Sigmoid colon (tissue), 7 donors: ENCODE measurements at regions of chr7 and their contacts with region 1.

Region 1: DNA sequence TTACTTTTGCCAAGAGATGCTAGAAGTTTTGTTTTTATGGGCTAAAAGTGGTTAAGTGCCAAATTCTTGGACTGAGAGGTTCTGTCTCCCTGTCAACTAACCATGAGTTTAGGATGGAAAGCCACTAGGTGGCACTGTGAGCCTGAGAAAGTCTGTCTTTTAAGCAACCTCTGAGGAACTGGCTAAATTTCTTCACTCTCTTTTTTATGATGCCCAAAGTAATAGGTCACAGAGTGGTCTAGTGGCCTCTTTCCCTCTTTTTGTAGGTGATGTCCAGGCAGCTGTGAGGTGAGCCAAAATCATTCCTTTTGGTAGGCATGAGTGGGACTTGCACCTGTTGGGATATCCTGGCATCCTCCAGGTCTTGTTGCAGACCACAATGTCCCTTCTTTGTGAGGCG is 56.8 kb downstream of the SND1 start:
- DNase-seq: peak; percentile 89
- H3K4me3 ChIP-seq: no peak overlapping the region
- H3K27ac ChIP-seq: no peak overlapping the region
- H3K4me1 ChIP-seq: peaks cover 0 to 13% (median 4%) of the 10 kb centered on the region in 4 donors
- H3K27me3 ChIP-seq: no peaks in the 10 kb centered on the region
- CTCF ChIP-seq: peak; percentile 66 to 75 (median 70)
- EP300 ChIP-seq: no peak
- POLR2A ChIP-seq: no peak

Region 2: GRCh38 chr7:128031901-128032604 is 323.3 kb after region 1 on chr7:
- intact Hi-C with region 1: loop called (anchors 5 kb)
- DNase-seq: peak; percentile 73
- H3K4me3 ChIP-seq: peak overlapping the region; percentile 35 to 62 (median 54)
- H3K27ac ChIP-seq: peak overlapping the region in 2 of 4 donors; percentile 57 to 62
- H3K4me1 ChIP-seq: peaks cover 3 to 29% (median 17%) of the 10 kb centered on the region in 4 donors
- H3K27me3 ChIP-seq: no peaks in the 10 kb centered on the region
- CTCF ChIP-seq: peak in 1 of 4 experiments; percentile 25
- EP300 ChIP-seq: no peak
- POLR2A ChIP-seq: no peak

Region 3: DNA sequence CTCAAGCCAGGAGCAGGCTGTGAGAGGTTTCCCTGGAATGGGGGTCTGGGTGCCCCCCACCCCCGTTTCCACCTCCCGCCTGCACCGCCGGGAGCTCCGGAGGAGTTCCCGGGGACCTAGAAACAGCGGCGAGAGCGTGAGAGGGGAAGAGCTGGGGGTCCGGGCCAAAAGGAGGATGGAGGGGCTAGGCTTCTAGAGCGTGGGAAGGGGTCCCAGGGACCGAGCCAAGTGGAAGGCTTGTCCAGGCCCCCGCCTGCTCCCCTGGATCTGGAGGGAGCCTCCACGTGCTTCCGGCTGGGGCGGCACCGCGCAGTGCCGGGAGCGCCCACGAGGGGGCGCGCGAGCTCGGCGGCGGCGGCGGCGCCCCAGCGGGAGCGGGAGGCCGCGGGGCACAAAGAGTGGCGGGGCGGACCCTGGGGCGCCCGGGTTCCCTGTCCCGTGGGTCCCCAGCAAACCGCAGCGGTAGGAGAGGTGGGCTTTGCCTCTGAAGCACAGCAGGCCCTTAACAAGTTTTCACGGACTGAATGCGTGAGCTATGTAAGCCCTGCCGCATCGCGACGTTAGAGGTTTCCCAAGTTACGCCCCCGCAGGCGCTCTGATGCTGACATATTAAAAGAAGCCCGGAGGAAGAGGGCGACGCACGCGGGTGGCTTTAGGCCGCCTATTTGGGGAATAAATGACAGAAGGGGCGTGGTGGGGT is 426.9 kb after region 1 on chr7:
- intact Hi-C with region 1: loop called (anchors 2 kb)
- DNase-seq: no peak
- H3K4me3 ChIP-seq: peak overlapping the region; percentile 38 to 58 (median 51)
- H3K27ac ChIP-seq: no peak overlapping the region
- H3K4me1 ChIP-seq: peaks cover 0 to 24% (median 21%) of the 10 kb centered on the region in 4 donors
- H3K27me3 ChIP-seq: peaks cover 3 to 72% (median 36%) of the 10 kb centered on the region in 3 donors
- CTCF ChIP-seq: peak in 3 of 4 experiments; percentile 26 to 98 (median 29)
- EP300 ChIP-seq: no peak
- POLR2A ChIP-seq: no peak

Region 4: GRCh38 chr7:128209229-128210035 is 500.6 kb after region 1 on chr7:
- intact Hi-C with region 1: loop called (anchors 1 kb)
- DNase-seq: peak; percentile 80
- H3K4me3 ChIP-seq: no peak overlapping the region
- H3K27ac ChIP-seq: no peak overlapping the region
- H3K4me1 ChIP-seq: no peaks in the 10 kb centered on the region
- H3K27me3 ChIP-seq: peaks cover 0 to 26% (median 5%) of the 10 kb centered on the region in 3 donors
- CTCF ChIP-seq: peak; percentile 93 to 99 (median 98)
- EP300 ChIP-seq: no peak
- POLR2A ChIP-seq: no peak